Activated CD4-positive, alpha-beta memory T cell treated with anti-CD3 and anti-CD28 coated beads for 36 hours (primary cell): ENCODE measurements at regions of chr2 and their contacts with region 1.

Region 1: GRCh38 chr2:113173542-113174395 is at the start of gene PSD4:
- DNase-seq: peak; percentile 95
- H3K4me3 Mint-ChIP-seq: peak within 1 kb of the TSS; percentile 95
- H3K27ac Mint-ChIP-seq: peak within 1 kb of the TSS; percentile 94
- H3K4me1 Mint-ChIP-seq: peaks cover 74% of the 10 kb centered on the region
- H3K27me3 Mint-ChIP-seq: peaks cover 2% of the 10 kb centered on the region
- total RNA-seq, gene PSD4: 156 to 170 TPM

Region 2: DNA sequence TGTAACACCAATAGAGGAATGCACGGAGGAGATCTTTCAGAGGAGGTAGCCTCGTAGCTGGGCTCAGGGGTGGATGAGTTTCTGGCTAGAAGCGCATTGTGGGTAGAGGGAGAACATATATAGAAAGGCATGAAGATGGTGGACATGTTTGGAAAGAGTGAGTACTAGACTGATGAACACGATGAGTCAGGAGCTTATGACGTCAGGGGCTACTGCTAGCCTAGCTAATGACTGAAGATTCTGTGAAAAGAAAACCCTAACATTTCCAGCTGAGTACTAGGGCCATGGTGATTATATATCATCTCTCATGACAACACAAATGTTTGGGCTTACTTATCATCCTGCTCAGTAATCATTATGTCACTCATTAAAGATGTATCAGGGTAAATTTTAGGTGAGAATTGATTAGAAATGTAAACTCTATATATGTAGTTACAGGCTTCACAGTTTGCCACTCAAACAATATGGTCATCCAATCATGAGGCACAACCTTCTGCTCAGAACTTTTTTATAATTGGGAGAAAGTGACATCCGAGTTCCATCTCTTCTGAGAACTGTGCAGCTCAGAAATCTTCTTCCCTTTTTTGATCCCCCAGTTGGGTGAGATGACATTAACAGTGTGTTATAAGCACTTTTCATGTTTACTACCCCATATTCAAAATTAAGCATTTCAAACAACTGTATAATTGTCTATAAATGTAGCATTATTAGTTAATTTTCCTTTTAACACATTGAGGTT is 68.6 kb before region 1 on chr2:
- CTCF ChIA-PET with region 1: no interaction called
- POLR2A ChIA-PET with region 1: interaction called, 15 read pairs
- intact Hi-C with region 1: loop called (anchors 2 kb)
- DNase-seq: peak; percentile 74
- H3K4me3 Mint-ChIP-seq: no peak overlapping the region
- H3K27ac Mint-ChIP-seq: peak overlapping the region; percentile 99
- H3K4me1 Mint-ChIP-seq: peaks cover 37% of the 10 kb centered on the region
- H3K27me3 Mint-ChIP-seq: peaks cover 8% of the 10 kb centered on the region

Region 3: DNA sequence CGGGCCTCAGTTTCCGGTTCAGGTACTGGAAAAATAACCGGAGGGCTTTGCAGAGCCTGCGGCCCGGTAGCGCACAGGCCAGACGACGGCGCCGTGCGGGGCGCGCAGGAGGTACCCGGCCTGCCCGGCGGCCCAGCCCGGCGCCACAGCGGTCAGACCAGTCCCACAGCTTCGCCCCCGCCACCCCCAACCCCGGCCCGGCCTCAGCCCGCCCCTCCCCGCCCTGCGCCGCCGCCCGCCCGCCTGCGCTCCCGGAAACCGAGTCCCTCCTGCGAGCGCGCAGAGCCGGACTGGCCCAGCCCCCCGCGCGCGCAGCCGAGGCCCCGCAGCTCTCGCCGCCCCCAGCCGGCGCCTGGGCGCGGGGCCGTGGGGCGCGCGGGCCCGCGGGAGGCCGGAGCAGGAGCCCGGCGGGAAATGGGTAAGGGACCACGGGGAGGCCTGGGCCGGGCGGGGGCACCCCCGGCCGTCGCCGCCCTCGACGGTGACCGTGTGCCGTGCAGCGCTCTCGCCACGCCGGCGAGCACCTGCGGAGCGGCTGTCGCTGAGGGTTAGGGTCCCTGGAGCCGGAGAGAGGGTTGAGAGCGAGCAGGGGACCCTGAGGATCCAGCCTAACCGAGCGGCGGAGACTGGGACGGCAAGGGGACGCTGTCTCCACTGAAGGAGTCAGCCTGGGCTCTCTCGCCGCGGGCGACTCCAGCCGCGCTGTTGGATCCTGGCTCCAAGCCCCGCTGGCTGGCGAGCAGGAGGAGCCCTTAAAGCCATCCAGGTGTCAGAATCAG is 16.5 kb before region 1 on chr2:
- CTCF ChIA-PET with region 1: interaction called, 35 read pairs
- POLR2A ChIA-PET with region 1: interaction called, 74 read pairs
- intact Hi-C with region 1: loop called (anchors 1 kb)
- DNase-seq: peak; percentile 66
- H3K4me3 Mint-ChIP-seq: peak overlapping the region; percentile 81
- H3K27ac Mint-ChIP-seq: peak overlapping the region; percentile 79
- H3K4me1 Mint-ChIP-seq: peaks cover 22% of the 10 kb centered on the region
- H3K27me3 Mint-ChIP-seq: no peaks in the 10 kb centered on the region

Region 4: GRCh38 chr2:113233593-113234550 is 60.1 kb after region 1 on chr2:
- CTCF ChIA-PET with region 1: no interaction called
- POLR2A ChIA-PET with region 1: interaction called, 15 read pairs
- intact Hi-C with region 1: no loop called
- DNase-seq: peak; percentile 33
- H3K4me3 Mint-ChIP-seq: no peak overlapping the region
- H3K27ac Mint-ChIP-seq: no peak overlapping the region
- H3K4me1 Mint-ChIP-seq: peaks cover 30% of the 10 kb centered on the region
- H3K27me3 Mint-ChIP-seq: no peaks in the 10 kb centered on the region

Region 5: GRCh38 chr2:113240150-113240862 is 66.5 kb after region 1 on chr2:
- CTCF ChIA-PET with region 1: interaction called, 6 read pairs
- POLR2A ChIA-PET with region 1: interaction called, 15 read pairs
- intact Hi-C with region 1: loop called (anchors 2 kb)
- DNase-seq: no peak
- H3K4me3 Mint-ChIP-seq: no peak overlapping the region
- H3K27ac Mint-ChIP-seq: peak overlapping the region; percentile 88
- H3K4me1 Mint-ChIP-seq: peaks cover 43% of the 10 kb centered on the region
- H3K27me3 Mint-ChIP-seq: no peaks in the 10 kb centered on the region